ENCODE measurements at regions of chr3 and their contacts with region 1.

Region 1: GRCh38 chr3:52225452-52226228 is at the start of gene TLR9:
- DNase-seq: peak; percentile 96
- H3K4me3 ChIP-seq: peak within 1 kb of the TSS; percentile 73
- H3K27ac ChIP-seq: peak within 1 kb of the TSS; percentile 91
- H3K4me1 ChIP-seq: peaks cover 38% of the 10 kb centered on the region
- CTCF ChIP-seq: no peak
- total RNA-seq, gene TLR9: 0.51 and 1.7 TPM in 2 replicates

Region 2: DNA sequence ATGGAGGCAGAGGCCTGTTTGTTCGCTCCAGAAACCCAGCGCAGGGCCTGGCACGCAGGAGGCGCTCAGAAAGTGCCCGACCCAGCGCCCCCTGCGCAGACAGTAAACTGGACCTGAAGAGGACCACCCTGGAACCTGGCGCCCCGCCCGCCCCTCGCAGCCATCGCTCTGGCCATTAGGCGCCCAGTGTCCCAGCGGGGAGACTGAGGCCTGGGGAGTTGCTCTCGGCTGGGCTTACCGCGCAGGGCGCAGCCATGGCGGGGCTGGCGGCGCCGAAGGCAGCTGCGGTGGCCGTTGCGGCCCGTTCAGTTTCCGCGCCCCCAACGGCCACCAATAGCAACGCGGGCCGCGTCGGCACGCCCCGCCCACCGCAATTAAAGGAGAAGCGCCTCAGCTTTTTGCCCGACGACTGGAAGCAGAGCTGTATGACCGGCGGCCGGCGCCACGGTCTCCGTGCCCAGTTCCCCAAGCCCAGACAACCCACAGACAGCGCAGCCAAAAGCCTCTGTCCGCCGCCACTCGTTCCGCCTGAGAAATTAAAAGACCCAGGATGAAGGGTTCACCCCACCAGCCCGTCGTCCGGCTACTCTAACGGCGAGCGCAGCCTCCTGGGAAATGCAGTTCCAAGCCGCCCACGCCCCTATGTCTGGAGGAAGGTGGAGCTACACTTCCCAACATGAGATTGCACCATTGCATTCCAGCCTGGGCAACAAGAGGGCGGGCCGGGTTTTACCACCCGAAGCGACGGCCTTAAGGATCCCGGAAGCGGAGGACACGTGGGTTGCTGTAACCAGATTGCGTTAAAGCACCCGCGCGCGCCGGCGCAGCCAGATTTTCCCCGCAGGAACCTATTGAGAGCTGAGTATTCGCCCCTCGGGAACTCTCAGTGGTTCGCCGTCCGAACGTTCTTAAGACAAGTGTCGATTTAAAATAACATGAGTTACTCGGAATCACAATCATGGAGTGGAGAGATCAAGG is 71.2 kb before region 1 on chr3 and contains the start of gene POC1A:
- CTCF ChIA-PET with region 1: interaction called, 4 read pairs
- POLR2A ChIA-PET with region 1: interaction called, 4 read pairs
- intact Hi-C with region 1: loop called (anchors 5 kb)
- DNase-seq: peak; percentile 94
- H3K4me3 ChIP-seq: peak within 1 kb of the TSS; percentile 93
- H3K27ac ChIP-seq: peak within 1 kb of the TSS; percentile 64
- H3K4me1 ChIP-seq: peaks cover 9% of the 10 kb centered on the region
- CTCF ChIP-seq: no peak
- total RNA-seq, gene POC1A: 34.5 and 40.0 TPM in 2 replicates

Region 3: DNA sequence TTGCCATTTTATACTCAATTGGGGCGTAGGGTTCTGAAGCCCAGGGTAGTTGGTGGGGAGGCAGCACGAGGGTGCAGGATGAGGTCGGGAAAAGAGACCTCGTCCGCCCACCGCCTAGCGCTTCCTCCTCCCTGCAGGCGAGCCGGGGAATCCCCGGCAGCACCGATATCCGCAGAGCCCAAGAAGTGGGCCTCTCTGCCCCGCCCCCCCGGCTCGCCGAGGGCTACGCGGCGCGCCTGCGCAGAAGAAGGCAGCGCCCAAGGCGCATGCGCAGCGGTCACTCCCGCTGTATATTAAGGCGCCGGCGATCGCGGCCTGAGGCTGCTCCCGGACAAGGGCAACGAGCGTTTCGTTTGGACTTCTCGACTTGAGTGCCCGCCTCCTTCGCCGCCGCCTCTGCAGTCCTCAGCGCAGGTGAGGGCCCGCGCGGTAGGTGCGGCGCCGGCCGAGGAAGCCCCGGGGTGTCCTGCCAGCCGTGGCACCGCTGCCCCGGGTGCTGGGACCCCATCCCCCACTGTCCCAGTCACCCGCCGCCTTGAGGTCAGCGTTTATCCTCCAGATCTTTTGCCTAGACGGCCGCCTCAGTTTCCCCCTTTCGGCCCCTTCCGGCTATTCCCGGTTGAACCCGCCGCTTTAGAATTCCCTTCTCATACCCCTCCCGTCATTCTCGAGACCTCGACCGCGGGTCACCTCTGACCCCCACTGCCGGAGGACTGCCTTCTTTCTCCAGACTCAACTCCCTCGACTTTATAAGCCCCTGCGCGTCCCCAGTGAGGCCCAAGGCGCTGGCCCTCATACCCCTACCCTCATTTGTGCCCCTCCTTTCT is 27.6 kb before region 1 on chr3 and contains the start of gene ALAS1:
- CTCF ChIA-PET with region 1: interaction called, 4 read pairs
- POLR2A ChIA-PET with region 1: interaction called, 16 read pairs
- intact Hi-C with region 1: no loop called
- DNase-seq: peak; percentile 95
- H3K4me3 ChIP-seq: peak within 1 kb of the TSS; percentile 84
- H3K27ac ChIP-seq: peak within 1 kb of the TSS; percentile 46
- H3K4me1 ChIP-seq: peaks cover 31% of the 10 kb centered on the region
- CTCF ChIP-seq: no peak
- total RNA-seq, gene ALAS1: 24.5 and 34.4 TPM in 2 replicates

Region 4: DNA sequence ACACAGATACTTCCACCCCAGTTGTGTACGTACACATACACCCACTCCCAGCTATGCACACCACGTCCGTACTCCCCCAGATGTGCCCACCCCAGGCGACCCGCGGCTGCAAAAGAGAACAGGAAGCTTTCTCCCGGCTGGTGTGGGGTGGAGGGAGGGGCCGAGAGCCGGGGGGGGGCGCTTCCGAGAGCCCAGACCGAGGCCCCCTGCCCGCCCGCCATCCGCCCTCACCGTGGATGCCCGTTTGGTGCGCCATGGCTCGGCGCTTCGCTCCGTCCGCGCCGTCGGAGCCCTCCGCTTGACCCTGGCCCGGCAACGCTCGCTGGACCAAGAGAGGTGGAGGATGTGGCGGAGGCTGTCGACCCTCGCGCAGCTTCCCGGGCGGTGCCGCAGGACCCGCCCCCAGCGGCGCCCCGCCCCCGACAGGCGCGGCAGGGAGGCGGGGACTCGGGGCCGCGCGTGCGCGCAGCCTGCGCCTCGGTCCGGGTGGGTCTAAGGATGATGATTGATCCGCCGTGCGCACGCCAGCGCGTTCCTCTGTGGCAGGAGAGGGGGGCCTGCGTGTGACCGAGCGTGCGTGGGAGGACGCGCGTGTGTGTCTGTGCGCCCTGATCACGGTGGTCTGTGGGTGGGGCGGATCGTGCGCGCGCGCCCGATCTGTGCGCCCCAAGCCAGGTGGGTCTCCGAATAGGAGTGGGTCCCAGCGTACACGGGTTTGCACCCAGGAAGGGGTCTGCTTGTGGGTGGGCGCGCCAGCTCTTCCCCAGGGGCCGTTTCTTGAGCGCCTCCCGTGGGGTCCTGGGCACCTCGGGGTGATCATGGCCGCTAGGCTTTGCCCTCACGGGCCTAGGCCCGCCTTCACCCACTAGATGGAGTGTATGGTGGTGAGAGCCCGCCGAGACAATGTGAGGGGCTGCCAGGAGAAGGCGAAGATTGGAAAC is 13.4 kb after region 1 on chr3 and contains the start of gene TWF2:
- CTCF ChIA-PET with region 1: interaction called, 8 read pairs
- POLR2A ChIA-PET with region 1: interaction called, 27 read pairs
- intact Hi-C with region 1: loop called (anchors 1 kb)
- DNase-seq: peak; percentile 88
- H3K4me3 ChIP-seq: peak within 1 kb of the TSS; percentile 81
- H3K27ac ChIP-seq: peak within 1 kb of the TSS; percentile 47
- H3K4me1 ChIP-seq: peaks cover 29% of the 10 kb centered on the region
- CTCF ChIP-seq: peak; percentile 71
- total RNA-seq, gene TWF2: 40.0 and 52.8 TPM in 2 replicates

Region 5: DNA sequence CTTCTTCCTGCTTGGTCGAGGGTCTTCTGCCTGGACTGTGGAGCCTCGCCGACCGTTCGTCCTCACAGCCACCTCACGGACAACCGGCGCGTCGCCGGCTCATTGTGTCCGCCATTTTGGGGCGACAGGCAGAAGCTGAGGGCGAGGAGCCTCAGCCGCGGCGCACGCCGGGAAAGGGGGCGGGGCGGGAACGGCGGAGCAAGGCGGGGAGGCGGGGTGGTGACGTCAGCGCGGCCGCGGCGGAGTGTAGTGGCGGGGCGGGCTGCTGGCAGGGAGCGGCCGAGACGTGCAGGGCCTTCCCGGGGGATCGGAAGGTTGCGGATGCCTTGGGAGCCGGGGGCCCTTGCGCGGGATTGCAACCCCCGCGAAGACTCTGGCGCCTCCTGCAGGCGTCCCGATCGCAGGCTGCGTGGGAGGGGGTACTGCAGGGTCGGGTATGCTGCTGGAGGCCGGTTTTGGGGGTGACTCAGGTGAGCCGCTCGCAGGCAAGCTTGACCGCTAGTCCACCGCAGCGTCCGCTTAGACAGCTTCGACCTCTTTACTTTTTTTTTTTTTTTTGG is 53.0 kb after region 1 on chr3 and contains the start of gene WDR82:
- CTCF ChIA-PET with region 1: interaction called, 3 read pairs
- POLR2A ChIA-PET with region 1: interaction called, 13 read pairs
- intact Hi-C with region 1: loop called (anchors 1 kb)
- DNase-seq: peak; percentile 94
- H3K4me3 ChIP-seq: peak within 1 kb of the TSS; percentile 70
- H3K27ac ChIP-seq: peak within 1 kb of the TSS; percentile 67
- H3K4me1 ChIP-seq: peaks cover 29% of the 10 kb centered on the region
- CTCF ChIP-seq: peak; percentile 60
- total RNA-seq, gene WDR82: 27.8 and 38.5 TPM in 2 replicates